Activated CD8-positive, alpha-beta T cell treated with anti-CD3 and anti-CD28 coated beads for 36 hours (primary cell): ENCODE measurements at regions of chr2 and their contacts with region 1.

Region 1: GRCh38 chr2:234451852-234452625 is 44.8 kb downstream of the ARL4C start:
- DNase-seq: no peak
- ATAC-seq: no peak
- H3K4me3 Mint-ChIP-seq: peak overlapping the region; percentile 77
- H3K27ac Mint-ChIP-seq: peak overlapping the region; percentile 89
- H3K4me1 Mint-ChIP-seq: peaks cover 70% of the 10 kb centered on the region
- H3K27me3 Mint-ChIP-seq: no peaks in the 10 kb centered on the region
- CTCF ChIP-seq: no peak

Region 2: GRCh38 chr2:234425619-234426603 is 26.1 kb before region 1 on chr2:
- CTCF ChIA-PET with region 1: interaction called, 5 read pairs
- POLR2A ChIA-PET with region 1: interaction called, 14 read pairs
- intact Hi-C with region 1: no loop called
- DNase-seq: peak; percentile 73
- ATAC-seq: peak; percentile 61
- H3K4me3 Mint-ChIP-seq: peak overlapping the region; percentile 55
- H3K27ac Mint-ChIP-seq: peak overlapping the region; percentile 88
- H3K4me1 Mint-ChIP-seq: peaks cover 81% of the 10 kb centered on the region
- H3K27me3 Mint-ChIP-seq: no peaks in the 10 kb centered on the region
- CTCF ChIP-seq: no peak

Region 3: GRCh38 chr2:234483568-234484251 is 31.7 kb after region 1 on chr2:
- CTCF ChIA-PET with region 1: interaction called, 12 read pairs
- POLR2A ChIA-PET with region 1: interaction called, 8 read pairs
- intact Hi-C with region 1: no loop called
- DNase-seq: peak; percentile 95
- ATAC-seq: peak; percentile 85
- H3K4me3 Mint-ChIP-seq: peak overlapping the region; percentile 47
- H3K27ac Mint-ChIP-seq: peak overlapping the region; percentile 93
- H3K4me1 Mint-ChIP-seq: peaks cover 75% of the 10 kb centered on the region
- H3K27me3 Mint-ChIP-seq: no peaks in the 10 kb centered on the region
- CTCF ChIP-seq: peak; percentile 68

Region 4: DNA sequence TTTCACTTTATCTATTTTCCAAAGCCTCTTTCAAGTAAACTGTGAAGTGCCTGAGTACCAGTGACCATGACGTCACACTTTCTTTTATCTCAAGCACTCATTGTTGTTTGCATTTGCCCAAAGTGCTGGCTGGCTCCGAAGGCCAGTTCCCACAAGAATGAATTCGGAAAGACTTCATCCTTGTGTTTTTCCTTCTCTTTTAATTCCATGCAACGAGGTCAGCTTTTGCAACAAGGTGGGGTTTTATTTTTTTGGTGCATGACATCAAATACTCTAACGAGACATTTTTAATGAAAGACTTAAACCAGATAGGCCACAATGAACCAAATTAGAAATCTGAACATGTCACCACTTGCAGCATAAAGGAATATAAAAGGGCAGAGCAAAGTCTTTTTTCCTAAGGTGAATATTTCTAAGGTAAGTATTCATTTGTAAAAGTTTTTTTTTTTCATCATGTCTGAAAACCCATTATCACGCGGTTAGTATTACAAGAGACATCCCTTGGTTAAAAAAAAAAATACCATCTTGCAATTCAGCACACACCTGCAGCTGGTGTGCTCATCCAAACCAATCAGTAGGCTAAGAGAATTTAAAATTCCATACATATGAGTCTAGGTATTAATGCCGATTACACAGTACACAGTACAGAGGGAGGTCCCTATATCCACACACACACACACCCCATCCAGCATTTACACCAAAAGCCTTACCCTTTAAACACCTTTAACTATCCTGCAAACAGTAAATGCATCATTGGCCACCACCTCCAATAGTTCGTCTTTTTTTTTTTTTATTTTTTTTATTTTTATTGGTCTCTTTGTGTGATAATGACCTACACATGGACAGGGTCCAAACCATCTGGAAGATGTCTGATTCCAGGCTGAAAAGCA is 42.6 kb after region 1 on chr2:
- CTCF ChIA-PET with region 1: interaction called, 4 read pairs
- POLR2A ChIA-PET with region 1: interaction called, 39 read pairs
- intact Hi-C with region 1: loop called (anchors 5 kb)
- DNase-seq: peak; percentile 45
- ATAC-seq: no peak
- H3K4me3 Mint-ChIP-seq: peak overlapping the region; percentile 90
- H3K27ac Mint-ChIP-seq: peak overlapping the region; percentile 91
- H3K4me1 Mint-ChIP-seq: peaks cover 49% of the 10 kb centered on the region
- H3K27me3 Mint-ChIP-seq: no peaks in the 10 kb centered on the region
- CTCF ChIP-seq: no peak

Region 5: GRCh38 chr2:234514873-234515638 is 63.0 kb after region 1 on chr2:
- CTCF ChIA-PET with region 1: no interaction called
- POLR2A ChIA-PET with region 1: no interaction called
- intact Hi-C with region 1: no loop called
- DNase-seq: no peak
- ATAC-seq: no peak
- H3K4me3 Mint-ChIP-seq: no peak overlapping the region
- H3K27ac Mint-ChIP-seq: no peak overlapping the region
- H3K4me1 Mint-ChIP-seq: peaks cover 4% of the 10 kb centered on the region
- H3K27me3 Mint-ChIP-seq: no peaks in the 10 kb centered on the region
- CTCF ChIP-seq: no peak